ENCODE measurements at regions of chr7 and their contacts with region 1.

Region 1: GRCh38 chr7:132780843-132781242 is 204.6 kb upstream of the PLXNA4 start:
- DNase-seq: no peak
- H3K4me3 ChIP-seq: no peak overlapping the region
- H3K27ac ChIP-seq: no peak overlapping the region
- H3K4me1 ChIP-seq: peaks cover 9 to 11% of the 10 kb centered on the region in 2 experiments
- H3K27me3 ChIP-seq: no peaks in the 10 kb centered on the region
- CTCF ChIP-seq: no peak
- EP300 ChIP-seq: no peak
- RAD21 ChIP-seq: no peak

Region 2: DNA sequence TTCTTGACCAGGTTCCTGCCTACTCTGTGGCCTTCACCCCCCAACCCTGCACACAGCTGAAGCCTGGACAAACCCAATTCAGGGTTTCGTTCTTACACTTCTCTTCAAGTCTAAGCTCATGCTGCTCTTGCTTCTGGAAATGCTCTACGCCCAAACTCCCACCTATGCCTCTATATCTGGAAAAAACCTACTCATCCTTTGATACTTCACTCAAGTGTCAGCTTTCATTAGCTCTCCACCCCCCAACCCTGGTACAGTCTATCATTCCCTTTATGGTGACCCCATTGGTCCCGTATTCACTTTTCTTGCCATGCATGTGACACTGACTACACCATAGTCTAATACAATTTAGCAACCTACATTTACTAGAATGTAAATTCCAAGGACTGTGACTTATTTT is 16.3 kb after region 1 on chr7:
- CTCF ChIA-PET with region 1: interaction called, 10 read pairs
- POLR2A ChIA-PET with region 1: no interaction called
- DNase-seq: no peak
- H3K4me3 ChIP-seq: no peak overlapping the region
- H3K27ac ChIP-seq: no peak overlapping the region
- H3K4me1 ChIP-seq: peaks cover 0 to 7% of the 10 kb centered on the region in 2 experiments; a peak in 2 of 4 replicates
- H3K27me3 ChIP-seq: no peaks in the 10 kb centered on the region
- CTCF ChIP-seq: no peak
- EP300 ChIP-seq: no peak
- RAD21 ChIP-seq: no peak

Measured in SK-N-SH (cell line).